CD4-positive, alpha-beta T cell (primary cell): ENCODE measurements at regions of chr11 and their contacts with region 1.

Region 1: GRCh38 chr11:506238-506994 is 626 bp downstream of the RNH1 start:
- DNase-seq: peak; percentile 93 to 99 (median 97)
- ATAC-seq: peak; percentile 67
- H3K4me3 ChIP-seq: peak overlapping the region; percentile 78
- H3K4me3 Mint-ChIP-seq: peak overlapping the region; percentile 97
- H3K27ac ChIP-seq: peak overlapping the region; percentile 100
- H3K27ac Mint-ChIP-seq: peak overlapping the region; percentile 100
- H3K4me1 ChIP-seq: peaks cover 53% of the 10 kb centered on the region
- H3K4me1 Mint-ChIP-seq: peaks cover 24% of the 10 kb centered on the region
- H3K27me3 ChIP-seq: no peaks in the 10 kb centered on the region
- H3K27me3 Mint-ChIP-seq: peaks cover 4% of the 10 kb centered on the region
- CTCF ChIP-seq: no peak

Region 2: GRCh38 chr11:236774-237767 is 269.3 kb before region 1 on chr11 and contains the start of gene PSMD13:
- CTCF ChIA-PET with region 1: no interaction called
- POLR2A ChIA-PET with region 1: interaction called, 10 read pairs
- intact Hi-C with region 1: loop called (anchors 2 kb)
- DNase-seq: peak; percentile 76 to 94 (median 84)
- ATAC-seq: peak; percentile 79
- H3K4me3 ChIP-seq: peak within 1 kb of the TSS; percentile 91
- H3K4me3 Mint-ChIP-seq: peak within 1 kb of the TSS; percentile 100
- H3K27ac ChIP-seq: peak within 1 kb of the TSS; percentile 97 to 100
- H3K27ac Mint-ChIP-seq: peak within 1 kb of the TSS; percentile 91
- H3K4me1 ChIP-seq: peaks cover 27% of the 10 kb centered on the region
- H3K4me1 Mint-ChIP-seq: peaks cover 55% of the 10 kb centered on the region
- H3K27me3 ChIP-seq: no peaks in the 10 kb centered on the region
- H3K27me3 Mint-ChIP-seq: no peaks in the 10 kb centered on the region
- CTCF ChIP-seq: peak; percentile 31
- total RNA-seq, gene PSMD13: 56.9 to 57.8 TPM

Region 3: DNA sequence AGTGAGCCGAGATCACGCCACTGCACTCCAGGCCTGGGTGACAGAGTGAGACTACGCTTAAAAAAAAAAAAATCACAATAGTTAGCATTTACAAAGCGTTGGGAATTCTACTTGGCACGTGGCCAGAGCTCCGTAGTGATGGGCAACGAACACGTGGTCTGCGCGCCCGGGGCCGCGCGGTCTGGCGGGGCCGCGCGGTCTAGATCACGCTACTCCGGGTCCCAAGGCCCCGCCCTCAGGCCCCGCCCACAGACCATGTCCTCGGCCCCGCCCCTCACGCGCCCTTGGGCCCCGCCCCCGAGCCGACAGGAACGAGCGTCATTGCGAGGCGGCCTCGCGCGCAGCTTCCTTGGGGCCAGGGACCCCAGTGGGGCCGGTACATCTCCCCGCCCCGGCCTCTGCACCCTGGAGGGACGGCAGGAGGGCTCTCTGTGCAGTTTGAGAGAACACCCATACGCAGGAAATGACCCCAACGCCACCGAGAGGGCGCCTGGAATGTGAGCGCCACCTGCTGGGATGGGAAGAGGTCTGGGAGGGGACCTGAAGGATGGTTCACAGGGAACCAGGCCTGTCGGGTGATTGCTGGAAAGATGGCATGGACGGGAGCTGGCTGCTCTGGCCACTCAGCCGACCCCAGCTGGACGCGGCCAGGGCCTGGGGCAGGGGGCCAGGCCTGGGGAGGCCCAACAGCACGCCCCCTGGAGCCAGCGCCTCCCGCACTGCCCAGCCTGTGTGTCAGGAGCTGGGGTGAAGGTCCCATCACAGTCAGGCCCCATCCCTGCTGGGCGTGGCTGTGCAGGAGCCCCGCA is 58.3 kb before region 1 on chr11:
- CTCF ChIA-PET with region 1: interaction called, 11 read pairs
- POLR2A ChIA-PET with region 1: interaction called, 27 read pairs
- intact Hi-C with region 1: loop called (anchors 1 to 10 kb)
- DNase-seq: peak; percentile 91 to 98 (median 94)
- ATAC-seq: peak; percentile 66
- H3K4me3 ChIP-seq: peak overlapping the region; percentile 63
- H3K4me3 Mint-ChIP-seq: peak overlapping the region; percentile 93
- H3K27ac ChIP-seq: peak overlapping the region; percentile 84 to 89
- H3K27ac Mint-ChIP-seq: peak overlapping the region; percentile 95
- H3K4me1 ChIP-seq: peaks cover 38% of the 10 kb centered on the region
- H3K4me1 Mint-ChIP-seq: peaks cover 26% of the 10 kb centered on the region
- H3K27me3 ChIP-seq: no peaks in the 10 kb centered on the region
- H3K27me3 Mint-ChIP-seq: no peaks in the 10 kb centered on the region
- CTCF ChIP-seq: peak; percentile 93

Region 4: GRCh38 chr11:535519-536454 is 29.4 kb after region 1 on chr11 and contains the start of gene HRAS:
- CTCF ChIA-PET with region 1: no interaction called
- POLR2A ChIA-PET with region 1: interaction called, 24 read pairs
- intact Hi-C with region 1: loop called in 1 of 2 experiments (anchors 1 kb)
- DNase-seq: peak; percentile 89 to 99 (median 96)
- ATAC-seq: peak; percentile 90
- H3K4me3 ChIP-seq: peak within 1 kb of the TSS; percentile 71
- H3K4me3 Mint-ChIP-seq: peak within 1 kb of the TSS; percentile 98
- H3K27ac ChIP-seq: peak within 1 kb of the TSS; percentile 73 to 79
- H3K27ac Mint-ChIP-seq: peak within 1 kb of the TSS; percentile 93
- H3K4me1 ChIP-seq: peaks cover 44% of the 10 kb centered on the region
- H3K4me1 Mint-ChIP-seq: peaks cover 16% of the 10 kb centered on the region
- H3K27me3 ChIP-seq: no peaks in the 10 kb centered on the region
- H3K27me3 Mint-ChIP-seq: no peaks in the 10 kb centered on the region
- CTCF ChIP-seq: no peak
- total RNA-seq, gene HRAS: 23.7 to 23.9 TPM

Region 5: GRCh38 chr11:575996-576768 is 69.8 kb after region 1 on chr11 and contains the start of gene PHRF1:
- CTCF ChIA-PET with region 1: no interaction called
- POLR2A ChIA-PET with region 1: interaction called, 10 read pairs
- intact Hi-C with region 1: no loop called
- DNase-seq: peak; percentile 91 to 98 (median 96)
- ATAC-seq: peak; percentile 90
- H3K4me3 ChIP-seq: peak within 1 kb of the TSS; percentile 87
- H3K4me3 Mint-ChIP-seq: peak within 1 kb of the TSS; percentile 95
- H3K27ac ChIP-seq: peak within 1 kb of the TSS; percentile 87 to 98
- H3K27ac Mint-ChIP-seq: peak within 1 kb of the TSS; percentile 92
- H3K4me1 ChIP-seq: peaks cover 56% of the 10 kb centered on the region
- H3K4me1 Mint-ChIP-seq: peaks cover 48% of the 10 kb centered on the region
- H3K27me3 ChIP-seq: no peaks in the 10 kb centered on the region
- H3K27me3 Mint-ChIP-seq: peaks cover 4% of the 10 kb centered on the region
- CTCF ChIP-seq: no peak
- total RNA-seq, gene PHRF1: 37.1 to 37.6 TPM